ENCODE measurements at regions of chr15 and their contacts with region 1.

Region 1: DNA sequence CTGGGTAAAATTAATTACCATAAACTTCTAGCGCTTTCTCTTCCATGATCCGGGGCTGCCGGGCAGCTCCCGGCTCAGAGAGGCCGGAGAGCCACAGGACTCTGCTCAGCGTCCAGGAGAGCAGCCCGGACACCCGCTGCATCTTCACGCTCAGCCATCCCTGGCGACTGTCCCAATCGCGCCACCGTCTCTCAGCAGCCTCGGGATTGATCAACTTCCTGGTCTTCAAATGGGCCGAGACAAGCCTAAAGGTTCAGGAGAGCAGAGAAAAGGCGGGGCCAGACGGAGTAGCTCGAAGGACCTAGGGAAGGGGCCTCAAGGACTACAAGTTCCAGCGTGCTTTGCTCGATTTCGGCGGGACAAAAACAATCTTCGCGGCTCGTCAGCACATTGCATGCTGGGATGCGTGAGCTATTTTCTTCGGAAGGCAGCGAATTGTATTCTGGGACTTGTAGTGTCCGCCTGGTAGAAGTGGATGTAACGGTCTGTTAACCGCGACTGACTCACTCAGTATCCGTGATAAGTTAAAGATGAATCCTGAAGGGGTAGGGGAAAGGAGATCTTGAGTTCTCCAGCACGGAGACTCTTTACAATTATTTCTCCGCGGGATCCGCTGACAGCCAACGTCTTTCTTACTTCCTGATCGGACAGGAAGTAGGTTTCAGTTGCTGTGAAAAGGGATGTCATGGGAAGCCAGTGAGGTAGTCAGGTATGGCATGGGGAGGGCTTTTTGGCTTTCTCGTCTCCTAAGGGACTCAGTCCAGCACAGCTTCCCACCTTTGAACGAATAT is at the start of gene CIAO2A:
- DNase-seq: peak; percentile 79 to 97 (median 91)
- ATAC-seq: peak; percentile 72
- H3K4me3 ChIP-seq: peak within 1 kb of the TSS; percentile 73 to 76
- H3K4me3 Mint-ChIP-seq: peak within 1 kb of the TSS; percentile 94
- H3K27ac ChIP-seq: peak within 1 kb of the TSS; percentile 82 to 91
- H3K27ac Mint-ChIP-seq: peak within 1 kb of the TSS; percentile 97
- H3K4me1 ChIP-seq: peaks cover 47% of the 10 kb centered on the region
- H3K4me1 Mint-ChIP-seq: peaks cover 74% of the 10 kb centered on the region
- H3K27me3 ChIP-seq: no peaks in the 10 kb centered on the region
- H3K27me3 Mint-ChIP-seq: no peaks in the 10 kb centered on the region
- CTCF ChIP-seq: no peak
- total RNA-seq, gene CIAO2A: 12.4 to 12.7 TPM

Region 2: DNA sequence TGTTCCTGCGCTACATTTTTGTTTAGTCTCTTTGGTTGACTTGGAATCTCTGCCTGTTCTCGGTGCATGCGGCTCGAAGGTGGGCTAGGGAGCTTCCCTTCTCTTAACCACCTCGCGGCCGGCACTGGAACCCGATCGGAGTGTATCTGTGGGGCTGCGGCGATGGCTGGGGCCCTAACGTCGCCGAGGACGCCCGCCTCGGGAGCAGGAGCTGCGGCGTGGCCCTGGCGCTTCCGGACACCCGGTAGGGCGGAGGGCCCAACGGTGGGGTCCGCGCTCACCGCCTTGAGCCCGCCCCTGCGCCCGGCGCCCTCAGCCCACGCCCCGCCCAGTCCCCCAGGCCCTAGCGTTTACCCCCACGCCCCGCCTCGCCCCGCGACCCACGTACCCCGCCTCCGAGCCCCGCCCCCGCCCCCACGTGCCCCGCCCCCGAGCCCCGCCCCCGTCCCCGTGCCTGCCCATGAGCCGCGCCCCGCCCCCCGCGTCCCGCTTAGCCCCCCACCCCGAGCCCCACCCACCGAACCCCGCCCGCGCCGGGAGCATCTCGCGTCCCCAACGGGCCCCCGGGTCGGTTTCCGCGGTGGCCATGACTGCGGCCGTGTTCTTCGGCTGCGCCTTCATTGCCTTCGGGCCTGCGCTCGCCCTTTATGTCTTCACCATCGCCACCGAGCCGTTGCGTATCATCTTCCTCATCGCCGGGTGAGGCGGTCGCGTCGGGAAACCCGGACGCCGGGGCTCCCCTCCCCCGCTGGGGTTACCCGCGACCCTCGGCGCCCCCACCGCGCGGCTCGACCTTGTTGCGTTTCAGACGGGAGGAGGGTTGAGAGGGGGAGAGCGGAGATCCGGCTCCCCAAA is 816.6 kb before region 1 on chr15 and contains the start of gene APH1B:
- CTCF ChIA-PET with region 1: no interaction called
- POLR2A ChIA-PET with region 1: no interaction called
- intact Hi-C with region 1: loop called (anchors 10 kb)
- DNase-seq: peak; percentile 51 to 87 (median 76)
- ATAC-seq: peak; percentile 88
- H3K4me3 ChIP-seq: peak within 1 kb of the TSS; percentile 79 to 80
- H3K4me3 Mint-ChIP-seq: peak within 1 kb of the TSS; percentile 89
- H3K27ac ChIP-seq: peak within 1 kb of the TSS; percentile 62 to 74
- H3K27ac Mint-ChIP-seq: peak within 1 kb of the TSS; percentile 91
- H3K4me1 ChIP-seq: peaks cover 19% of the 10 kb centered on the region
- H3K4me1 Mint-ChIP-seq: peaks cover 36% of the 10 kb centered on the region
- H3K27me3 ChIP-seq: no peaks in the 10 kb centered on the region
- H3K27me3 Mint-ChIP-seq: no peaks in the 10 kb centered on the region
- CTCF ChIP-seq: no peak
- total RNA-seq, gene APH1B: 10.8 to 13.6 TPM

Region 3: GRCh38 chr15:63600616-63601025 is 493.2 kb before region 1 on chr15:
- CTCF ChIA-PET with region 1: no interaction called
- POLR2A ChIA-PET with region 1: interaction called, 4 read pairs
- intact Hi-C with region 1: loop called in 1 of 2 experiments (anchors 10 kb)
- DNase-seq: peak; percentile 79 to 98 (median 90)
- ATAC-seq: peak; percentile 80
- H3K4me3 ChIP-seq: peak overlapping the region; percentile 87 to 96
- H3K4me3 Mint-ChIP-seq: peak overlapping the region; percentile 94
- H3K27ac ChIP-seq: peak overlapping the region; percentile 75 to 87
- H3K27ac Mint-ChIP-seq: peak overlapping the region; percentile 94
- H3K4me1 ChIP-seq: peaks cover 29% of the 10 kb centered on the region
- H3K4me1 Mint-ChIP-seq: peaks cover 56% of the 10 kb centered on the region
- H3K27me3 ChIP-seq: no peaks in the 10 kb centered on the region
- H3K27me3 Mint-ChIP-seq: no peaks in the 10 kb centered on the region
- CTCF ChIP-seq: no peak

Region 4: GRCh38 chr15:64153480-64154367 is 59.9 kb after region 1 on chr15:
- CTCF ChIA-PET with region 1: interaction called, 13 read pairs
- POLR2A ChIA-PET with region 1: interaction called, 6 read pairs
- intact Hi-C with region 1: loop called (anchors 2 kb)
- DNase-seq: peak; percentile 85 to 96 (median 90)
- ATAC-seq: peak; percentile 96
- H3K4me3 ChIP-seq: no peak overlapping the region
- H3K4me3 Mint-ChIP-seq: peak overlapping the region; percentile 70
- H3K27ac ChIP-seq: no peak overlapping the region
- H3K27ac Mint-ChIP-seq: peak overlapping the region; percentile 56
- H3K4me1 ChIP-seq: peaks cover 33% of the 10 kb centered on the region
- H3K4me1 Mint-ChIP-seq: peaks cover 37% of the 10 kb centered on the region
- H3K27me3 ChIP-seq: peaks cover 14 to 20% of the 10 kb centered on the region in 2 experiments
- H3K27me3 Mint-ChIP-seq: peaks cover 3% of the 10 kb centered on the region
- CTCF ChIP-seq: peak; percentile 78

Region 5: GRCh38 chr15:64387562-64388168 is 293.8 kb after region 1 on chr15 and contains the start of gene TRIP4:
- CTCF ChIA-PET with region 1: no interaction called
- POLR2A ChIA-PET with region 1: interaction called, 5 read pairs
- intact Hi-C with region 1: loop called in 1 of 2 experiments (anchors 2 kb)
- DNase-seq: peak; percentile 93 to 98 (median 96)
- ATAC-seq: peak; percentile 99
- H3K4me3 ChIP-seq: peak within 1 kb of the TSS; percentile 86 to 98
- H3K4me3 Mint-ChIP-seq: peak within 1 kb of the TSS; percentile 99
- H3K27ac ChIP-seq: peak within 1 kb of the TSS; percentile 51 to 69
- H3K27ac Mint-ChIP-seq: peak within 1 kb of the TSS; percentile 97
- H3K4me1 ChIP-seq: peaks cover 19% of the 10 kb centered on the region
- H3K4me1 Mint-ChIP-seq: peaks cover 21% of the 10 kb centered on the region
- H3K27me3 ChIP-seq: no peaks in the 10 kb centered on the region
- H3K27me3 Mint-ChIP-seq: no peaks in the 10 kb centered on the region
- CTCF ChIP-seq: no peak
- total RNA-seq, gene TRIP4: 10.7 to 11.2 TPM

Region 6: DNA sequence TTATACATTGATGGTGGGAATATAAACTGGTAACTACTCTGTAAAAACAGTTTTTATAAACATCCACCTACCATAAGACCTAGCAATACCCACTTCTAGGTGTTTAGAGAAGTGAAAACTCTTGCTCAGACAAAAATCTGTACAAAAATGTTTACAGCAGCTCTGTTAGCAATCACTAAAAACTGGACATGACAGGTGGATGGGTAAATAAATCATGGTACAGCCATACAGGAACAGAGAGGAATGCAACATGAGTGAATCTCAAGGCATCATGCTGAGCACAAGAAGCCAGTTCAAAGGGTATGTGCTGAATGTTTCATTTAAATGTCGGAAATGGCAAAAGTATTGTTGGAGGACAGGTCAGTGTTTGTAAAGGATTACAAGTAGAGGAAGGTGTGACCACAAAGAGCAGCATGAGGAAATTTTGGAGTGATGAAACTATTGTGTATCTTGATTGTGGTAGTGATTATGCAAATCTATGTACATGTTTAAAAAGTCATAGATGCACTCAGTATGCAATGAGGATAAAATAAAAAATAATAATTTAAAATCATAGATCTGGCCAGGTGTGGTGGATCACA is 1199.2 kb after region 1 on chr15:
- CTCF ChIA-PET with region 1: no interaction called
- POLR2A ChIA-PET with region 1: no interaction called
- intact Hi-C with region 1: loop called in 1 of 2 experiments (anchors 10 kb)
- DNase-seq: no peak
- ATAC-seq: no peak
- H3K4me3 ChIP-seq: no peak overlapping the region
- H3K4me3 Mint-ChIP-seq: no peak overlapping the region
- H3K27ac ChIP-seq: no peak overlapping the region
- H3K27ac Mint-ChIP-seq: no peak overlapping the region
- H3K4me1 ChIP-seq: peaks cover 24% of the 10 kb centered on the region
- H3K4me1 Mint-ChIP-seq: peaks cover 25% of the 10 kb centered on the region
- H3K27me3 ChIP-seq: no peaks in the 10 kb centered on the region
- H3K27me3 Mint-ChIP-seq: no peaks in the 10 kb centered on the region
- CTCF ChIP-seq: no peak

Measured in CD8-positive, alpha-beta T cell (primary cell).